CD4-positive, alpha-beta memory T cell (primary cell): ENCODE measurements at regions of chr1 and their contacts with region 1.

Region 1: GRCh38 chr1:145978854-145979759 is 14.6 kb downstream of the POLR3GL start:
- DNase-seq: peak; percentile 78 to 94 (median 81)
- H3K4me3 ChIP-seq: peak overlapping the region; percentile 52 to 62
- H3K4me3 Mint-ChIP-seq: no peak overlapping the region
- H3K27ac ChIP-seq: peak overlapping the region; percentile 70
- H3K27ac Mint-ChIP-seq: no peak overlapping the region
- H3K4me1 ChIP-seq: peaks cover 77% of the 10 kb centered on the region
- H3K4me1 Mint-ChIP-seq: peaks cover 13 to 31% (median 21%) of the 10 kb centered on the region in 4 donors
- H3K27me3 ChIP-seq: no peaks in the 10 kb centered on the region
- H3K27me3 Mint-ChIP-seq: no peaks in the 10 kb centered on the region

Region 2: GRCh38 chr1:145858894-145859490 is 120.1 kb before region 1 on chr1 and contains the start of gene PIAS3:
- CTCF ChIA-PET with region 1: interaction called, 7 read pairs
- POLR2A ChIA-PET with region 1: interaction called, 15 read pairs
- intact Hi-C with region 1: no loop called
- DNase-seq: peak; percentile 76 to 84 (median 80)
- H3K4me3 ChIP-seq: peak within 1 kb of the TSS; percentile 90 to 96
- H3K4me3 Mint-ChIP-seq: peak within 1 kb of the TSS; percentile 92 to 97 (median 96)
- H3K27ac ChIP-seq: peak within 1 kb of the TSS; percentile 74
- H3K27ac Mint-ChIP-seq: peak within 1 kb of the TSS; percentile 89 to 97 (median 90)
- H3K4me1 ChIP-seq: peaks cover 17% of the 10 kb centered on the region
- H3K4me1 Mint-ChIP-seq: peaks cover 8 to 29% (median 19%) of the 10 kb centered on the region in 4 donors
- H3K27me3 ChIP-seq: no peaks in the 10 kb centered on the region
- H3K27me3 Mint-ChIP-seq: peaks cover 0 to 2% of the 10 kb centered on the region in 2 donors
- total RNA-seq, gene PIAS3: 30.3 to 33.6 TPM

Region 3: DNA sequence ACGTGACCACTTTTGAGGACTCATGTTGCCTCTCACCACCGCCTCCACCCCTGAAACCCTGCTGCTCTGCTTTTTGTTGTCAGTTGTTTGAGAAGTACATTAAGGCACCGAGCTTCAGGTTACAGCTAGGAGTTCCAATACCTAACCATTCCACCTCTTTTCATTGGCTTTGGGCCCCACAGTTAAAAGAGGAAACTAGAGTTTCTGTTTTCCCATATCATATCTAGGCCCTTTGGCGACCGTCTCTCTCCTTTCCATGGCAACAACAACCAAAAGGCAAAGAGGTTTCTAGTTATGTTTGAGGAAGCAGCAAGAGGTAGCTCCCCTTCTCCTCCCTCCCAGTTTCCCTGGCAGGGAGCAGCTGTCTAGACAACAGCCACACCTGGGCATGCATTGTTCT is 99.3 kb before region 1 on chr1:
- CTCF ChIA-PET with region 1: no interaction called
- POLR2A ChIA-PET with region 1: no interaction called
- intact Hi-C with region 1: no loop called
- DNase-seq: no peak
- H3K4me3 ChIP-seq: no peak overlapping the region
- H3K4me3 Mint-ChIP-seq: no peak overlapping the region
- H3K27ac ChIP-seq: no peak overlapping the region
- H3K27ac Mint-ChIP-seq: no peak overlapping the region
- H3K4me1 ChIP-seq: no peaks in the 10 kb centered on the region
- H3K4me1 Mint-ChIP-seq: peaks cover 0 to 5% (median 3%) of the 10 kb centered on the region in 4 donors
- H3K27me3 ChIP-seq: peaks cover 11% of the 10 kb centered on the region
- H3K27me3 Mint-ChIP-seq: peaks cover 10 to 16% of the 10 kb centered on the region in 2 donors

Region 4: GRCh38 chr1:145918144-145918992 is 60.7 kb before region 1 on chr1 and contains the start of gene PEX11B:
- CTCF ChIA-PET with region 1: interaction called, 8 read pairs
- POLR2A ChIA-PET with region 1: interaction called, 11 read pairs
- intact Hi-C with region 1: no loop called
- DNase-seq: peak; percentile 90 to 96 (median 92)
- H3K4me3 ChIP-seq: peak within 1 kb of the TSS; percentile 90 to 96
- H3K4me3 Mint-ChIP-seq: peak within 1 kb of the TSS; percentile 89 to 96 (median 92)
- H3K27ac ChIP-seq: peak within 1 kb of the TSS; percentile 79
- H3K27ac Mint-ChIP-seq: peak within 1 kb of the TSS; percentile 91 to 97 (median 95)
- H3K4me1 ChIP-seq: peaks cover 28% of the 10 kb centered on the region
- H3K4me1 Mint-ChIP-seq: peaks cover 24 to 45% (median 35%) of the 10 kb centered on the region in 4 donors
- H3K27me3 ChIP-seq: no peaks in the 10 kb centered on the region
- H3K27me3 Mint-ChIP-seq: no peaks in the 10 kb centered on the region
- total RNA-seq, gene PEX11B: 34.7 to 38.7 TPM

Region 5: GRCh38 chr1:145963995-145964901 is 14.9 kb before region 1 on chr1 and contains the starts of genes ANKRD34A and POLR3GL:
- CTCF ChIA-PET with region 1: interaction called, 98 read pairs
- POLR2A ChIA-PET with region 1: interaction called, 203 read pairs
- intact Hi-C with region 1: loop called (anchors 1 kb)
- DNase-seq: peak; percentile 88 to 97 (median 90)
- H3K4me3 ChIP-seq: peak within 1 kb of the TSS; percentile 65 to 94
- H3K4me3 Mint-ChIP-seq: peak within 1 kb of the TSS; percentile 89 to 95 (median 93)
- H3K27ac ChIP-seq: peak within 1 kb of the TSS; percentile 71
- H3K27ac Mint-ChIP-seq: peak within 1 kb of the TSS; percentile 89 to 99 (median 98)
- H3K4me1 ChIP-seq: peaks cover 62% of the 10 kb centered on the region
- H3K4me1 Mint-ChIP-seq: peaks cover 32 to 72% (median 45%) of the 10 kb centered on the region in 4 donors
- H3K27me3 ChIP-seq: no peaks in the 10 kb centered on the region
- H3K27me3 Mint-ChIP-seq: no peaks in the 10 kb centered on the region
- total RNA-seq, gene ANKRD34A: 1.8 to 2.1 TPM
- total RNA-seq, gene POLR3GL: 36.6 to 38.3 TPM

Region 6: GRCh38 chr1:146012737-146013403 is 33.8 kb after region 1 on chr1:
- CTCF ChIA-PET with region 1: interaction called, 447 read pairs
- POLR2A ChIA-PET with region 1: interaction called, 1,967 read pairs
- intact Hi-C with region 1: loop called (anchors 1 kb)
- DNase-seq: peak; percentile 65 to 73 (median 69)
- H3K4me3 ChIP-seq: no peak overlapping the region
- H3K4me3 Mint-ChIP-seq: no peak overlapping the region
- H3K27ac ChIP-seq: no peak overlapping the region
- H3K27ac Mint-ChIP-seq: no peak overlapping the region
- H3K4me1 ChIP-seq: peaks cover under 1% of the 10 kb centered on the region
- H3K4me1 Mint-ChIP-seq: peaks cover 6 to 9% (median 7%) of the 10 kb centered on the region in 4 donors
- H3K27me3 ChIP-seq: no peaks in the 10 kb centered on the region
- H3K27me3 Mint-ChIP-seq: peaks cover 2 to 4% of the 10 kb centered on the region in 2 donors